Motor neuron (in vitro differentiated cells): ENCODE measurements at regions of chr12 and their contacts with region 1.

Region 1: GRCh38 chr12:29545102-29545467 is 47.6 kb upstream of the OVCH1 start:
- ATAC-seq: no peak
- H3K4me3 ChIP-seq: no peak overlapping the region
- H3K27ac ChIP-seq: no peak overlapping the region
- H3K4me1 ChIP-seq: no peaks in the 10 kb centered on the region

Region 2: GRCh38 chr12:29650371-29650770 is 105.3 kb after region 1 on chr12:
- in situ Hi-C with region 1: no loop called
- ATAC-seq: no peak
- H3K4me3 ChIP-seq: no peak overlapping the region
- H3K27ac ChIP-seq: no peak overlapping the region
- H3K4me1 ChIP-seq: no peaks in the 10 kb centered on the region

Region 3: GRCh38 chr12:30286345-30286926 is 741.4 kb after region 1 on chr12:
- in situ Hi-C with region 1: loop called in 1 of 9 experiments (anchors 25 kb)
- ATAC-seq: peak in 4 of 8 experiments; percentile 53 to 71 (median 57)
- H3K4me3 ChIP-seq: no peak overlapping the region
- H3K27ac ChIP-seq: no peak overlapping the region
- H3K4me1 ChIP-seq: no peaks in the 10 kb centered on the region